ENCODE measurements at regions of chr6 and their contacts with region 1.

Region 1: GRCh38 chr6:87660226-87660911 is 41.7 kb downstream of the AKIRIN2 start:
- H3K4me3 Mint-ChIP-seq: no peak overlapping the region
- H3K27ac Mint-ChIP-seq: no peak overlapping the region
- H3K4me1 Mint-ChIP-seq: peaks cover 4% of the 10 kb centered on the region
- H3K27me3 Mint-ChIP-seq: no peaks in the 10 kb centered on the region

Region 2: GRCh38 chr6:87600576-87600975 is 59.8 kb before region 1 on chr6:
- intact Hi-C with region 1: loop called (anchors 10 kb)
- H3K4me3 Mint-ChIP-seq: no peak overlapping the region
- H3K27ac Mint-ChIP-seq: no peak overlapping the region
- H3K4me1 Mint-ChIP-seq: peaks cover 12% of the 10 kb centered on the region
- H3K27me3 Mint-ChIP-seq: no peaks in the 10 kb centered on the region

Region 3: DNA sequence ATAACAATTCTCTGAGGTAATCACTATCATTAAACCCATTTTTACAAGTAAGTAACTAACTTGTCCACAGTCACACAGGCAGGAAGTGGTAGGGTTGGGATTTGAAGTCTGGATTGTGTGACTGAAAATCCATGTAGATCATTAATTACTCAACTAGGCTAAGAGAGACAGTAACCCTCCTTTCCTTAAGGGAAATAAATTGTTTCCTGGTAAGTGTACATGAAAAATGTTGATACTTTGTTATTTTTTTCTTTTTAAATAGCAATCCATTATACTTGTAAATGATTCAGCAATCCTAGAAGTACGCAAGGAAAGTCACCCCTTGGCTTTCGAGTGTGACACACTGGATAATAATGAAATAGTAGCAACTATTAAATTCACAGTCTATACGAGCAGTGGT is 398.8 kb after region 1 on chr6:
- intact Hi-C with region 1: no loop called
- H3K4me3 Mint-ChIP-seq: no peak overlapping the region
- H3K27ac Mint-ChIP-seq: no peak overlapping the region
- H3K4me1 Mint-ChIP-seq: no peaks in the 10 kb centered on the region
- H3K27me3 Mint-ChIP-seq: no peaks in the 10 kb centered on the region

Measured in dendritic cell treated with granulocyte-macrophage colony-stimulating factor and Interleukin-4, amounts not matched to agents 40 ng/mL and 50 ng/mL, for 4 days (primary cell).